ENCODE measurements at regions of chr14 and their contacts with region 1.

Region 1: GRCh38 chr14:95452176-95452892 is 64.1 kb downstream of the SYNE3 start:
- DNase-seq: peak in 1 of 2 experiments; percentile 60
- H3K4me3 ChIP-seq: no peak overlapping the region
- H3K27ac ChIP-seq: no peak overlapping the region
- H3K4me1 ChIP-seq: no peaks in the 10 kb centered on the region
- H3K27me3 ChIP-seq: no peaks in the 10 kb centered on the region
- CTCF ChIP-seq: peak; percentile 41 to 77 (median 54)
- EP300 ChIP-seq: no peak
- POLR2A ChIP-seq: no peak
- RAD21 ChIP-seq: peak; percentile 29 to 61; a peak in 3 of 4 replicates

Region 2: DNA sequence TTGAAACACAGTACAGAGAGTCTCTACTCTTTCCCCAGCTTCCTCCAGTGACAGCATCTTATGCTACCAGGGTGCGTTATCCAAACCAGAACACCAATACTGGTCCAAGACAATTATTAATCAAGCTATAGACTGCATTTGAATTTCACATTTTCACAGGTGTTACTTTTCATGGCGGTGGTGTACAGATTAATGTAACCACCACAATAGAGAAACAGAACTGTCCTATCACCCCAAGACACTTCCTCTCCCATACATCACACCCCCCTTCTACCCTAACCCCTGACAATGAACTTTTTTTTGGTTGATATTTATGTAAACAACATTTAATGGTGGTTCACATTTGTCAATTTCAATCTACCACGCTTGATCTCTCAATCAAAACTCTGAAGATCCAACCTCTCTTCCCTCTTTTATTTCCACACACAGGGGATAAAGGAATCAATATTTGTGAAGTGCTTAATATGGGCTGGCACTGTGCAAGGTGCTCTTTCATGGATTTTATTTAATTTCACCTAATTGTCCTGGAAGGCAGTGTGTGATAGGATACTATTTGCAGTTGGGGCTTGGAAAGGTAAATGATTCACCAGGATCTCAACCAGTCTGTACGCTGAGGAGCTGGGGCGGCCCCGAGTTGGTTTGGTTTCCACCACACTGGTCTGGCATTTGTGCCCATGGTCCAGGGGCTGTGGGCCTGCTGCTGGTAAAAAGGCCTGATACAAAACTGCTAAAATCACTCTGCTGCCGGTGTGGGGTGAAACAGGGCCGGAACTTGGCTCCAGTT is 240.4 kb before region 1 on chr14:
- CTCF ChIA-PET with region 1: no interaction called
- POLR2A ChIA-PET with region 1: no interaction called
- DNase-seq: no peak
- H3K4me3 ChIP-seq: no peak overlapping the region
- H3K27ac ChIP-seq: no peak overlapping the region
- H3K4me1 ChIP-seq: no peaks in the 10 kb centered on the region
- H3K27me3 ChIP-seq: no peaks in the 10 kb centered on the region; a peak in 3 of 7 replicates
- CTCF ChIP-seq: no peak
- EP300 ChIP-seq: no peak
- POLR2A ChIP-seq: no peak
- RAD21 ChIP-seq: no peak

Region 3: DNA sequence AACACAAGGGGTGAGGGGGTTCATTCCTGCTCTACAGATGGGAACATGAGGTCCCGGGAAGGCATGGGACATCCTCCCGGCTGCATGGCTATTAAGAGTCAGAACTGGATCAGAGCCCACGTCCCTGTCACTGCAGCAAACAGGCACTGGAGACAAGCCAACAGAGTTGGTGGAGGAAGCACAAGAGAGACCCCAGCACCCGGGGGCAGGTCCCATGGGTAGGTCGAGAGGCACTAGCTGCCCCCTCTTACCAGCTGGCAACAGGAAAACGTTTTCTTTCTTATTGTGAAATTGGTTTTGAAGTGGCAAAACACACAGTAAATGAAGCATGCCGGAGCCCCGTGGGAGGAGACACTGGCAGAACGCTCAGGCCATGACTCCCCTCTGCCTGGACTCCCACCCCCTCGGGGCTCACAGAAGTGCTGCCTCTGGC is 20.5 kb after region 1 on chr14:
- CTCF ChIA-PET with region 1: interaction called, 17 read pairs
- POLR2A ChIA-PET with region 1: no interaction called
- DNase-seq: no peak
- H3K4me3 ChIP-seq: no peak overlapping the region
- H3K27ac ChIP-seq: no peak overlapping the region
- H3K4me1 ChIP-seq: no peaks in the 10 kb centered on the region; a peak in 1 of 7 replicates
- H3K27me3 ChIP-seq: no peaks in the 10 kb centered on the region
- CTCF ChIP-seq: no peak
- EP300 ChIP-seq: no peak
- POLR2A ChIP-seq: no peak
- RAD21 ChIP-seq: no peak

Region 4: GRCh38 chr14:95483309-95484165 is 31.2 kb after region 1 on chr14:
- CTCF ChIA-PET with region 1: interaction called, 18 read pairs
- POLR2A ChIA-PET with region 1: no interaction called
- DNase-seq: no peak
- H3K4me3 ChIP-seq: no peak overlapping the region
- H3K27ac ChIP-seq: no peak overlapping the region
- H3K4me1 ChIP-seq: peaks cover 0 to 13% (median 5%) of the 10 kb centered on the region in 4 experiments; a peak in 6 of 7 replicates
- H3K27me3 ChIP-seq: no peaks in the 10 kb centered on the region
- CTCF ChIP-seq: no peak
- EP300 ChIP-seq: no peak
- POLR2A ChIP-seq: no peak
- RAD21 ChIP-seq: no peak

Region 5: GRCh38 chr14:95488376-95489213 is 36.3 kb after region 1 on chr14:
- CTCF ChIA-PET with region 1: interaction called, 18 read pairs
- POLR2A ChIA-PET with region 1: no interaction called
- DNase-seq: no peak
- H3K4me3 ChIP-seq: no peak overlapping the region
- H3K27ac ChIP-seq: no peak overlapping the region
- H3K4me1 ChIP-seq: peaks cover 0 to 5% (median 3%) of the 10 kb centered on the region in 4 experiments; a peak in 2 of 7 replicates
- H3K27me3 ChIP-seq: no peaks in the 10 kb centered on the region
- CTCF ChIP-seq: no peak
- EP300 ChIP-seq: no peak
- POLR2A ChIP-seq: no peak
- RAD21 ChIP-seq: no peak

Region 6: DNA sequence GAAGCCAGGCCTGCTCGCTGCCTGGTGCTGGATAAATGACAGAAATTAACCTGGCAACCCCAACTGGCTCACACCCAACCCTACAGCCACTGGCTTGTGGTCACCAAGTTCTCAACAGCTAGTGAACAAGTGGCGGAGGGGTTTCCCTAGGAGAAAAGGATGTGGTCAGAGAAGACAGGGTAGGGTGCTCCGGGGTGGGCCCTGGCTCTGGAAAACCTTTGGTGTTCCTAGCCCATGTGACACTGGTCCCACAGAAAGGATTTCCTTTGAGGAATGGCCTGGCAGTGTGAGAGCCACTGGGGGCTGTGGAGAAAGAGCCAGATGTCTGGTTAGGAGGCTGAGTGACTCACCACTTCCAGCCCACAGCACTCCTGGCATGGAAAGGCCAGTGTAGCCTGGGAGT is 55.4 kb after region 1 on chr14:
- CTCF ChIA-PET with region 1: interaction called, 27 read pairs
- POLR2A ChIA-PET with region 1: no interaction called
- DNase-seq: no peak
- H3K4me3 ChIP-seq: no peak overlapping the region
- H3K27ac ChIP-seq: no peak overlapping the region
- H3K4me1 ChIP-seq: no peaks in the 10 kb centered on the region
- H3K27me3 ChIP-seq: no peaks in the 10 kb centered on the region; a peak in 1 of 7 replicates
- CTCF ChIP-seq: no peak
- EP300 ChIP-seq: no peak
- POLR2A ChIP-seq: no peak
- RAD21 ChIP-seq: no peak

Region 7: DNA sequence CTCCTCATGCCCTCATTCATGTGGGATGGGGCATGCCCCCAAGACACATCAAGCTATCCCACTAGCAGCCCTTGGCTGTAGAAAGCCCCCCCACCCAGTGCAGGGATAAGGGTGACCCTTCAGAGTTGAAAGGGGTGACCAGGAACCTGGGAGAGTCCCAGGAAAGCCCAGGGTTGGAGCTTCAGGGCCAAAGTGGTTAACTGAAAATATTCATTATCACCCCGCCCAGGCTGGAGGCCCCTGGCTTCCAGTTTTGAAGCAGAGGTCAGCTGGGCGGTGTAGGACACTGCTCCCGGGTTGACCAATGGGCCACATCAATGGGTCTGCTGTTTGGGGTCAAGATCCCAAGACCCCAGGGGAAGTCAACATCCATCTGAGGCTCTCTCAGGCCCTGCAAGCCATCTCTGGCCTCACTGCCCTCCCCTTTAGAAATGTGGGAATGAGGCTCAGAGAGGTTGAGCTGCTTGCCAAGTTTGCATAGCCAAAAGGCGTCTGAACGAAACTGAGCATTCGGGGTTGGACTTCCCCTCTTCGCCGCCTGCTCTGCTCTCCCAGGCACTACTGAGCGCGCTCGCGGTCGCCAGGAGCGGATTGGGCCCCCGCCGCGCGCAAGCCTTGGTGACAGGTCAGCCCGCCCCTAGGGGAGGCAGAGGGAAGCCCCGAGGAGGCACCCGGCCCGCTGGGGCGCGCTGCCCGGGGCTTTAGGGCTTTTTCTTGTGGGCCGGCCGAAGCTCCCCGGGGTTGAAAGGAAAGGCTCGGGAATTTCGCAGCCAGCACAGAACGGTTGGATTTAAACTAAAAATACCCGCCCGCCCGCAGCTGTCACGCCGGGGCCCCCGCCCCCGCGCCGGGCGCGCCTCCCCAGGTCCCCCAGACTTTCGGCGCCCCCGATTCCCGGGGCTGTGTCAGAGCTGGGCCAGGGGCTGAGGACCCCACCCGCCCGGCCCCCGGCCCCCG is 63.5 kb after region 1 on chr14:
- CTCF ChIA-PET with region 1: interaction called, 27 read pairs
- POLR2A ChIA-PET with region 1: interaction called, 3 read pairs
- DNase-seq: peak in 1 of 2 experiments; percentile 73
- H3K4me3 ChIP-seq: peak overlapping the region; percentile 31 to 66 (median 40)
- H3K27ac ChIP-seq: no peak overlapping the region
- H3K4me1 ChIP-seq: peaks cover 0 to 22% (median 8%) of the 10 kb centered on the region in 4 experiments; a peak in 5 of 7 replicates
- H3K27me3 ChIP-seq: peaks cover 4 to 33% (median 27%) of the 10 kb centered on the region in 4 experiments
- CTCF ChIP-seq: peak; percentile 11 to 38 (median 12)
- EP300 ChIP-seq: no peak
- POLR2A ChIP-seq: no peak
- RAD21 ChIP-seq: 0 out of 4 replicates have a peak, but pooled peaks have one; percentile 9 to 10

Measured in H1 (cell line).